GM13976 (cell line): ENCODE measurements at regions of chr5 and their contacts with region 1.

Region 1: GRCh38 chr5:89435347-89435746 is 552.4 kb upstream of the MEF2C start:
- DNase-seq: peak; percentile 4
- CTCF ChIP-seq: no peak

Region 2: DNA sequence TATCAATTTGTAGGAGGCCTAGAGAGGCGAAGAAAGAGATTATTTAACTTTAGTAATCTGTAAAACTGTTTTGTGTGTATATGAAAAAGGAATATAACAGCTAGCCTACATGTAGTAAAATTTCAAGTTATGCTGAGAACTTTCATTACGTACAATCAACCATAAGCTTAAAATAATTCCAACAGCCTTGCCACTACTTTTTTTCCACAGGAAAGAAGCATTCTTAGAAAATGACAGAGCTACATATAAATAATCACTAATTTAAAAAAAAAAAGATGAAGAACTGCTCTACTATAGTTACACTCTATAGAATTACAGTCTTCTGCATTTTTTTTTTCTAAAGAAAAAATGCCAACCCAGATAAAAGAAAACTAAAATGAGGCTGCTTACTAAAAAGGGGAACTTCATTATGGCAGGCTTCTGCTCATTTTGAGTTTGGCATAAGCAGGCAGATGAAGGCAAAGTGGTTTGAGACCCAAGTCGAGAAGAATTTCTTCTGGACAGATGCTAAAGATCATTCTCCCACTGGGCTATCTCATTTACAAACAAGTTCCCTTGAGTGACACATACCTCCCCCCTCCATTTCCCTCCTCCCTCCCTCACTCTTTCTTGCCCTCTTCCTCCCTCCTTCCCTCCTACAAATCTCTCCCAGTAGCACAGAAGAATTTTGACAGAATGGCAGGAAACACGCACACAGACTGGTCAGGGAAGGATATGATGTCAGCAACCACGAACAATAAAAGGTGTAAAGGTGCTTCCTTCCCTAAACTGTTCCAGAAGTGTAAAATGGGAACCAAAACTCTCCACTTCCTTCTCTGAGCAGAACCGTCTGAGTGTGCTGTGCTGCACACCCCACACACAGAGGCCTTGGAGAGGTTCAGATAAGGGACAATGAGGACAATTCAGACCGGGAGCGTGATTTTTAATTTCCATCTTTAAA is 608.4 kb before region 1 on chr5:
- in situ Hi-C with region 1: loop called (anchors 10 kb)
- DNase-seq: no peak
- CTCF ChIP-seq: no peak

Region 3: GRCh38 chr5:89081360-89081759 is 354.0 kb before region 1 on chr5:
- in situ Hi-C with region 1: loop called (anchors 25 kb)
- DNase-seq: no peak
- CTCF ChIP-seq: no peak

Region 4: DNA sequence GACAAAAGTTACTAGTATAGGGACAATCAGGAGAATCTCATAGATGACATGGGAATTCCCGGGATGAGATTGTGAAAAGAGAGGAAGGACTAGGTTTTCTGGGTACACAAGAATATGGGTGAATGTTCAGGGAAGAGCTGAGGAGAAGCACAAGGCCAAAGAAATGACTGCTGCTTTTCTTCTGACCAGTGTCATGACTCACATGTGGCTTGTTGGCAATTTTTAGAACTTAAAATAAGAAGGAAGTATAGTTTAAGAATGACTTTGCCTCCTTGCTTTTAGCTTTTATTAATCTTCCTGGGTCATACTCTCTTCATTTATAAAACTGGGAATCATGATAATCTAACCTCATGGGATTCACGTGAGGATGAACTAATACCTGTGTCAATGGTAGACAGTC is 100.1 kb after region 1 on chr5:
- in situ Hi-C with region 1: no loop called
- DNase-seq: no peak
- CTCF ChIP-seq: no peak

Region 5: DNA sequence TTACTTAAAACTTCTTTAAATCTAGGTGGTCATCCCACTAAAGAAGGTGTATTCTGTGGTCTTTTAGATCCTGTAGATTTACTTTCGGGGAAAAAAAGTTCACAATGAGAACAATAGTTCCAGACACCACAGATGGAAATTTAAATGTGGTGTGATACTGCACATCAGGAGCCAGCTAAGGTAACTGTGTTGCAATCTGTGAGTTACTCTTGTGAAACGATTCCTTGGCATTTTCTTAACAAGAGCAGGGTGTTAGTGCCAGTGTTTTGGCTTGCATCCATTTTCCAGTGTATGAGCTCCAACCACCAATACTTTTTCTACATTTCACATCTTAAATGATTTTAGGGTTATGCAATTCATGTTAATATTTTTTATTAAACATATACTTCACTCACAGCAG is 299.7 kb after region 1 on chr5:
- in situ Hi-C with region 1: no loop called
- DNase-seq: no peak
- CTCF ChIP-seq: no peak